Heart left ventricle (tissue), 16 donors: ENCODE measurements at regions of chr19 and their contacts with region 1.

Region 1: DNA sequence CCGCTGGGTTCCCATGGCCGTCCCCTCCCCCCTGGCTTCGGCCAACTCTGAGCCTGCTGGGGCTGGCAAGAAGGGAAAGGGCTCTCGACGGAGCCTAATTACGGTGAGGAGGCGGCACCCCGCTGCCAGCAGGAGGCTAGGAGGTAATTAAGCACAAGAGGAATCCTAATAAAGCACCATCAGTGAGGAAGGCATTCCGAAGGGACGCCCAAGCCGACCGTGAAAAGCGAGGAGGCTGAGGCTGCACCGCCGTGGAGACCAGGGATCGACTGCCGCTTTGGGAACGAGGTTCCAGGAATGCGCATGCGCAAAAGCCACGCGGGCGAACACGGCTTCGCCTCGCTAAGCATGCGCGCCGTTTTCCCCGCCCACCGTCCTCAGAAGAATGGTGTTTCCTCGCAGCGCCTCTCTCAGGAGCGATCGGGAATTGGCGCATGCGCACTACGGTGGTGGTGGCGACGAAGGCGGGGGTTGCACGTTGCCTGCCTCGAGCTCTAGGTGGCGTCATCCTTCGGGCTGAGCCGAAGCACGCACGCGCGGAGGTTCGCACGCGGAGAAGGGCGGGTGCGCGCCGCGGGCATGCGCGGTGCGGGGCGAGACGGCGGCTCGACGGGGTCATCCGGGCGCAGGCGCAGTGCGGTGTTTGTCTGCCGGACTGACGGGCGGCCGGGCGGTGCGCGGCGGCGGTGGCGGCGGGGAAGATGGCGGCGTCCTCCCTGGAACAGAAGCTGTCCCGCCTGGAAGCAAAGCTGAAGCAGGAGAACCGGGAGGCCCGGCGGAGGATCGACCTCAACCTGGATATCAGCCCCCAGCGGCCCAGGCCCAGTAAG is at the start of gene MAP2K7:
- DNase-seq: peak; percentile 100
- ATAC-seq: peak; percentile 83 to 93 (median 88)
- H3K4me3 ChIP-seq: peak within 1 kb of the TSS; percentile 69 to 97 (median 88)
- H3K27ac ChIP-seq: peak within 1 kb of the TSS; percentile 70 to 93 (median 88)
- H3K4me1 ChIP-seq: peaks cover 0 to 51% (median 34%) of the 10 kb centered on the region in 12 donors
- H3K27me3 ChIP-seq: no peaks in the 10 kb centered on the region
- CTCF ChIP-seq: peak; percentile 22 to 88 (median 65)
- POLR2A ChIP-seq: peak in 1 of 2 donors; percentile 67
- total RNA-seq, gene MAP2K7: 11.6 to 26.6 (median 23.5) TPM

Region 2: GRCh38 chr19:7652061-7652641 is 251.3 kb before region 1 on chr19:
- intact Hi-C with region 1: loop called in 1 of 10 experiments (anchors 10 kb)
- DNase-seq: peak; percentile 74 to 92 (median 80)
- ATAC-seq: peak; percentile 58 to 88 (median 82)
- H3K4me3 ChIP-seq: peak overlapping the region in 9 of 12 donors; percentile 16 to 42 (median 25)
- H3K27ac ChIP-seq: peak overlapping the region in 2 of 12 donors; percentile 23 to 51
- H3K4me1 ChIP-seq: peaks cover 0 to 18% (median 0%) of the 10 kb centered on the region in 12 donors
- H3K27me3 ChIP-seq: peaks cover 0 to 6% (median 0%) of the 10 kb centered on the region in 9 donors
- CTCF ChIP-seq: peak; percentile 96 to 99 (median 98)
- POLR2A ChIP-seq: no peak

Region 3: GRCh38 chr19:7852851-7853769 is 50.3 kb before region 1 on chr19:
- intact Hi-C with region 1: loop called in 4 of 10 experiments (anchors 2 to 10 kb)
- DNase-seq: peak in 4 of 5 donors; percentile 49 to 64 (median 54)
- ATAC-seq: peak; percentile 30 to 66 (median 56)
- H3K4me3 ChIP-seq: no peak overlapping the region
- H3K27ac ChIP-seq: no peak overlapping the region
- H3K4me1 ChIP-seq: peaks cover 0 to 21% (median 4%) of the 10 kb centered on the region in 12 donors
- H3K27me3 ChIP-seq: no peaks in the 10 kb centered on the region
- CTCF ChIP-seq: peak; percentile 68 to 92 (median 77)
- POLR2A ChIP-seq: no peak

Region 4: GRCh38 chr19:7868676-7869452 is 34.6 kb before region 1 on chr19:
- intact Hi-C with region 1: loop called in 1 of 10 experiments (anchors 5 kb)
- DNase-seq: peak; percentile 51 to 82 (median 72)
- ATAC-seq: peak in 3 of 4 donors; percentile 43 to 76 (median 60)
- H3K4me3 ChIP-seq: peak overlapping the region; percentile 21 to 58 (median 48)
- H3K27ac ChIP-seq: peak overlapping the region in 4 of 12 donors; percentile 24 to 55 (median 36)
- H3K4me1 ChIP-seq: peaks cover 4 to 45% (median 21%) of the 10 kb centered on the region in 12 donors
- H3K27me3 ChIP-seq: peaks cover 8 to 58% (median 22%) of the 10 kb centered on the region in 9 donors
- CTCF ChIP-seq: peak; percentile 51 to 88 (median 80)
- POLR2A ChIP-seq: peak in 1 of 2 donors; percentile 12

Region 5: DNA sequence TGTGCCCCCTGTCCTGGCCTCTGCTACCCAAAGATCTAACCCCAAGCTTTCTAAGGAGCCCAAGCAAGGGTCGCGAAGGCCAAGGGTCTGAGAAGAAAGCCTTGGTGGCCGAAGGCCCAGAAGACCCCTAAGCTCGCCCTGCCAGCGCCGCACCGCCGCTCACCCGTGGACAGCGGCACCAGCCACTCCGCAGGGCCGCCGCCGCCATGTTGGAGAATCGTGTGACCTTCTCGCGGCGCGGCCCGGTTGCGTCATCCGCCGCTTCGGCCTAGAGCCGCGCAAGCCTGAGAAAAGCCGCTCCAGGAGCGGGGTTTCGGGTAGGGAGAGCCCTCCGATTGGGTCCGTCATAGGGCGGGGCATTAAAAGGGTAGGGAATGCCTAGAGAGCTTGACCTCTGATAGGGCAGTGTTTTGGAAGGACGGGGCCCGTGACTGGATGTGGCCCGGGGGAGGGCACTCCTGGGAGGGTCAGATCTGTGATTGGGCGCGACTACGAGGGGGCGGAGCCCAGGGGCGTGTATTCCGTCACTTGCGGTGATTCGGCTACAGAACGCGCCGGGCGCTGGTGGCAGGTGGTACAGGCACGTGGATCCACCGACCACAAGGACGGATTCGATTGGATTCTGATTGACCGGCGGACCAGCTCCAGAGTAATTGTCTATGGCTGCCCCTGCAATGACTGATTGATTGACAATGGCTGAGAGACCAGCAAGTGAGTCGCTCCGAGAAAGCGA is 40.2 kb after region 1 on chr19 and contains the start of gene TIMM44:
- intact Hi-C with region 1: loop called in 1 of 10 experiments (anchors 1 kb)
- DNase-seq: peak; percentile 99 to 100 (median 100)
- ATAC-seq: peak; percentile 98 to 100 (median 99)
- H3K4me3 ChIP-seq: peak within 1 kb of the TSS; percentile 52 to 100 (median 86)
- H3K27ac ChIP-seq: peak within 1 kb of the TSS; percentile 83 to 99 (median 94)
- H3K4me1 ChIP-seq: peaks cover 0 to 25% (median 15%) of the 10 kb centered on the region in 12 donors
- H3K27me3 ChIP-seq: no peaks in the 10 kb centered on the region
- CTCF ChIP-seq: peak in 1 of 12 donors; percentile 8
- POLR2A ChIP-seq: peak in 1 of 2 donors; percentile 85
- total RNA-seq, gene TIMM44: 55.9 to 99.9 (median 70.6) TPM